Naive thymus-derived CD4-positive, alpha-beta T cell (primary cell): ENCODE measurements at regions of chr14 and their contacts with region 1.

Region 1: DNA sequence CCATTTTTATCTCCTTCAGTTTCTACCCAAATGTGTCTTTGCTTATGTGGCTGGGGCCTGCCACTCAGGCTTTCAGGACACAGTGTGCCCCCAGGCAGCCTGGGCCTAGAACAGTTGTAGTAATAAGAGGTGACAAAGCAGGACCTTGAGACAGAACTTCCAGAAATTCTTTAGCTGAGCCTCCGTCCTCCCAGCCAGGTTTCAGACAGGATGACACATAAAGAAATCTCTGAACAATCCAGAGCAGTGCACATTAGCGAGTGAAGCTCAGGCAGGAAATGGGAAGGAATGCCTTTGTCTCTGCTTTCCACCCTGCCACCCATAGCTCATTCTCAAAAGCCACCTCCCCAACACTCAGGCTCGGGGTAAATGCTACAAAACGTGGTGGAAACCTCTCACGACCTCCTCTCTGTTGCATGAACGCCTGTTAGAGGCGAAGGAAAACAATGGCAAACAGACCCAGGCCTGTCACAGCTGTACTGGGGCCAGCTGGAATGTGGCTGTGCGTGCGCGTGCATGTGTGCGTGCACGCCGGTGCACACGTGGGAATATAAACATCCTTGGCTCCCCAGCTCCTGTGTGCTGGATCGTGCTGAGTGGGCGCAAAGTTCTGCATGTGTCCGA is 286.7 kb downstream of the ZFP36L1 start:
- DNase-seq: peak in 2 of 9 donors; percentile 13 to 14
- ATAC-seq: no peak
- H3K4me3 ChIP-seq: peak overlapping the region; percentile 19
- H3K4me3 Mint-ChIP-seq: peak overlapping the region; percentile 39 to 84 (median 78)
- H3K27ac ChIP-seq: peak overlapping the region; percentile 52
- H3K27ac Mint-ChIP-seq: peak overlapping the region in 8 of 9 donors; percentile 89 to 98 (median 93)
- H3K4me1 ChIP-seq: peaks cover 29 to 66% of the 10 kb centered on the region in 2 donors
- H3K4me1 Mint-ChIP-seq: peaks cover 28 to 93% (median 86%) of the 10 kb centered on the region in 7 donors
- H3K27me3 ChIP-seq: no peaks in the 10 kb centered on the region
- H3K27me3 Mint-ChIP-seq: no peaks in the 10 kb centered on the region

Region 2: GRCh38 chr14:68369281-68370056 is 136.7 kb before region 1 on chr14:
- CTCF ChIA-PET with region 1: interaction called, 5 read pairs
- POLR2A ChIA-PET with region 1: no interaction called
- intact Hi-C with region 1: loop called in 1 of 2 experiments (anchors 5 kb)
- DNase-seq: no peak
- ATAC-seq: no peak
- H3K4me3 ChIP-seq: no peak overlapping the region
- H3K4me3 Mint-ChIP-seq: peak overlapping the region in 7 of 10 donors; percentile 42 to 61 (median 47)
- H3K27ac ChIP-seq: no peak overlapping the region
- H3K27ac Mint-ChIP-seq: peak overlapping the region in 5 of 9 donors; percentile 14 to 71 (median 18)
- H3K4me1 ChIP-seq: peaks cover 0 to 11% of the 10 kb centered on the region in 2 donors
- H3K4me1 Mint-ChIP-seq: peaks cover 11 to 68% (median 55%) of the 10 kb centered on the region in 7 donors
- H3K27me3 ChIP-seq: no peaks in the 10 kb centered on the region
- H3K27me3 Mint-ChIP-seq: no peaks in the 10 kb centered on the region

Region 3: GRCh38 chr14:68482772-68483395 is 23.2 kb before region 1 on chr14:
- CTCF ChIA-PET with region 1: interaction called, 5 read pairs
- POLR2A ChIA-PET with region 1: interaction called, 41 read pairs
- intact Hi-C with region 1: loop called in 1 of 2 experiments (anchors 1 kb)
- DNase-seq: no peak
- ATAC-seq: no peak
- H3K4me3 ChIP-seq: no peak overlapping the region
- H3K4me3 Mint-ChIP-seq: peak overlapping the region in 9 of 10 donors; percentile 28 to 85 (median 39)
- H3K27ac ChIP-seq: no peak overlapping the region
- H3K27ac Mint-ChIP-seq: peak overlapping the region in 8 of 9 donors; percentile 71 to 96 (median 92)
- H3K4me1 ChIP-seq: peaks cover 22 to 48% of the 10 kb centered on the region in 2 donors
- H3K4me1 Mint-ChIP-seq: peaks cover 37 to 84% (median 79%) of the 10 kb centered on the region in 7 donors
- H3K27me3 ChIP-seq: no peaks in the 10 kb centered on the region
- H3K27me3 Mint-ChIP-seq: no peaks in the 10 kb centered on the region

Region 4: DNA sequence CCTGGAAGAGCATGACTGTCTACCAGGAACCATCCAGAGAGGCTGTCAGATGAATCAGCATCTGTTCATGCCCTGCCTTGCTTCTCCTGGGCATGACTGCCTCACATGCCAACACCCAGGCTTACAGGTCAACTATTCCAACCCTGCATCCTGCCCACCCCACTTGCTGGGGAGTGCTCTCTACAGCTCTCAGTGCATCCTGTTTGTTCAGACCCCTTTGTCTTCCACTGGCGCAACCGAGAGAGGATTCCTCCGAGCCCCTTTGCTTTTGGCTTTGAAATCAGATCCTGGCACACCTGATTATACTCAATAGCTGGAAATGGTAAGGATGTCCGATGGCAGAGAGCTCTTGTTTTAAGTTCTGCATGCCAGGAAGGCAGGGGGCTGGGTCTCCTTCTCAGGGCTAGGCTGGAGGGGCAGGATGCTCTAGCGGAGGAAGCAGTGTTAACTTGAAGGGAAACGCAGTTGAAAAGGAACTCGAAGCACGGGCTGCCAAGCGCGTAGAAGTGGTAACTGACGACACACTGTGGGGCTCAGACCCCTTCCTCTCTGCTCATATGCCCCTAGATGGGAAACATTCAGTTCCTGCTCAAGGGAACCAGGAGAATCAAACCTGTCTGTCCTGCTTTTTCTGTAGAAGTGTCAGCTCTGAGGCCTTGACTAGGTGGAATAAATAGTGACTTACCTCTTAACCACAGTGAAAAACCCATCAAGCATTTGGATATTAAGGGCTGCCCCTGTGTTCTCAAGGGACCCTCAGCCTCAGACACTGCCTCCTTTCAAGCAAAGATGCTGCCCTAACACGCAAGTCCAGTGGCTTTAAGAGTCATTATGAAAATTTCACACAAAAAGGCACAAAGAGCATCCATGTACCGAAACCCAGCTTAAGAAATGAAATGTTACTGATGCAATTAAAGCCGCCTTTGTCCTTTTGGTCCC is 10.8 kb before region 1 on chr14:
- CTCF ChIA-PET with region 1: interaction called, 6 read pairs
- POLR2A ChIA-PET with region 1: interaction called, 32 read pairs
- intact Hi-C with region 1: loop called in 1 of 2 experiments (anchors 1 kb)
- DNase-seq: peak in 7 of 9 donors; percentile 18 to 70 (median 60)
- ATAC-seq: peak; percentile 83
- H3K4me3 ChIP-seq: no peak overlapping the region
- H3K4me3 Mint-ChIP-seq: peak overlapping the region in 9 of 10 donors; percentile 17 to 78 (median 74)
- H3K27ac ChIP-seq: peak overlapping the region; percentile 45
- H3K27ac Mint-ChIP-seq: peak overlapping the region in 8 of 9 donors; percentile 39 to 90 (median 86)
- H3K4me1 ChIP-seq: peaks cover 0 to 25% of the 10 kb centered on the region in 2 donors
- H3K4me1 Mint-ChIP-seq: peaks cover 0 to 85% (median 66%) of the 10 kb centered on the region in 7 donors
- H3K27me3 ChIP-seq: no peaks in the 10 kb centered on the region
- H3K27me3 Mint-ChIP-seq: no peaks in the 10 kb centered on the region

Region 5: DNA sequence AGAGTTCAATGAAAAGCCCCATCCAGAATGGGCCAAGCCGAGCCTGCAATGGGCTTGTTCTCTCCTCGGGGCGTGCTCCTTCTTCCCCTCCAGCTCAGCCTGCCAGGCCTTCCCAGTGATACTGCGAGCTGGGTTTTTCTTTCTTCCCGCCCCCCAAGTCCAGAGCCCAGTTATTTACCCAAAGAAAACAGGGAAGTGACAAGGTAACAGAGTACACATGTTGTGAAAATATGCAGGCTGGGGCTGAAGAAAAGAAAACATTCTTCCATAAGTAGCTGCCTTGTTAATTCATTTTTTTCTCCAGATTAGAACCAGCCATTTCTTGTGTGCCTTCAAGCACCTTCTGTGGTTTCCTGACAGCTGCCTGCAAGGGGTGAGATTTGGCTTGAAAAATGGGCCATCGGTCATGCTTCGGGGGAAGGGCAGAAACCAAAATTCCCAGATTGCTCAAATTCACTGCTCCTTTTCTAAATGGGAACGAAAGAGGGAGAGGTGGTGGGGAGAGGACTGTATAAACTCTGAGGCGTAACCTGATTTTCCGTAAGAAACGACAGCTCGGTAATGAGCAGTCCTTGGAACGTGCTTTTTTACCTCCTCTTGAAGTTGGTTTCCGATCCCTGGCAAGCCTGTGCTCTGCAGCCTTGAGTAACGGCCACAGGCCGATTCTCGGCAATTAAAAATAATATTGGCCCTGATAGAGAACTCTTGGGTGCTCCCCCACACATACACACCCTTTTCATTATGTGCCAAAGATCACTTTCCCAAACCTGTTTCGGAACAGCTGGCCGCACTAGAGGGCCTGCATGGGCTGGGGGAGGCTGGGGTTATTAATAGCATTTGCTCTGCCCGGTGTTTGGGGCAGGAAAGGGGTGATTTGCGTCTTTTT is 57.4 kb after region 1 on chr14:
- CTCF ChIA-PET with region 1: no interaction called
- POLR2A ChIA-PET with region 1: no interaction called
- intact Hi-C with region 1: loop called in 1 of 2 experiments (anchors 2 kb)
- DNase-seq: peak in 4 of 9 donors; percentile 10 to 23 (median 13)
- ATAC-seq: no peak
- H3K4me3 ChIP-seq: no peak overlapping the region
- H3K4me3 Mint-ChIP-seq: peak overlapping the region in 9 of 10 donors; percentile 25 to 75 (median 59)
- H3K27ac ChIP-seq: no peak overlapping the region
- H3K27ac Mint-ChIP-seq: peak overlapping the region in 8 of 9 donors; percentile 1 to 90 (median 66)
- H3K4me1 ChIP-seq: peaks cover 0 to 33% of the 10 kb centered on the region in 2 donors
- H3K4me1 Mint-ChIP-seq: peaks cover 20 to 63% (median 54%) of the 10 kb centered on the region in 7 donors
- H3K27me3 ChIP-seq: no peaks in the 10 kb centered on the region
- H3K27me3 Mint-ChIP-seq: no peaks in the 10 kb centered on the region

Region 6: GRCh38 chr14:68685419-68686204 is 179.5 kb after region 1 on chr14:
- CTCF ChIA-PET with region 1: interaction called, 3 read pairs
- POLR2A ChIA-PET with region 1: interaction called, 14 read pairs
- intact Hi-C with region 1: no loop called
- DNase-seq: peak; percentile 31 to 74 (median 64)
- ATAC-seq: peak; percentile 91
- H3K4me3 ChIP-seq: no peak overlapping the region
- H3K4me3 Mint-ChIP-seq: peak overlapping the region; percentile 3 to 74 (median 48)
- H3K27ac ChIP-seq: peak overlapping the region; percentile 25
- H3K27ac Mint-ChIP-seq: peak overlapping the region; percentile 74 to 97 (median 91)
- H3K4me1 ChIP-seq: peaks cover 44 to 53% of the 10 kb centered on the region in 2 donors
- H3K4me1 Mint-ChIP-seq: peaks cover 52 to 74% (median 59%) of the 10 kb centered on the region in 7 donors
- H3K27me3 ChIP-seq: no peaks in the 10 kb centered on the region
- H3K27me3 Mint-ChIP-seq: no peaks in the 10 kb centered on the region